Activated T-helper 1 cell treated with anti-CD3 and anti-CD28 coated beads, Interleukin-12 subunit alpha, Interleukin-12 subunit beta, Interleukin-2, Interleukin-4 antibody, amounts not matched to agents 30 ng/mL and 10 ng/mL and 1 ng/mL, durations not matched to agents 14 hours and 24 hours and 36 hours (primary cell): ENCODE measurements at regions of chr16 and their contacts with region 1.

Region 1: GRCh38 chr16:69520800-69521602 is 44.8 kb upstream of the NFAT5 start:
- DNase-seq: no peak
- H3K4me3 Mint-ChIP-seq: no peak overlapping the region
- H3K27ac Mint-ChIP-seq: peak overlapping the region; percentile 75
- H3K4me1 Mint-ChIP-seq: peaks cover 17% of the 10 kb centered on the region
- H3K27me3 Mint-ChIP-seq: no peaks in the 10 kb centered on the region

Region 2: DNA sequence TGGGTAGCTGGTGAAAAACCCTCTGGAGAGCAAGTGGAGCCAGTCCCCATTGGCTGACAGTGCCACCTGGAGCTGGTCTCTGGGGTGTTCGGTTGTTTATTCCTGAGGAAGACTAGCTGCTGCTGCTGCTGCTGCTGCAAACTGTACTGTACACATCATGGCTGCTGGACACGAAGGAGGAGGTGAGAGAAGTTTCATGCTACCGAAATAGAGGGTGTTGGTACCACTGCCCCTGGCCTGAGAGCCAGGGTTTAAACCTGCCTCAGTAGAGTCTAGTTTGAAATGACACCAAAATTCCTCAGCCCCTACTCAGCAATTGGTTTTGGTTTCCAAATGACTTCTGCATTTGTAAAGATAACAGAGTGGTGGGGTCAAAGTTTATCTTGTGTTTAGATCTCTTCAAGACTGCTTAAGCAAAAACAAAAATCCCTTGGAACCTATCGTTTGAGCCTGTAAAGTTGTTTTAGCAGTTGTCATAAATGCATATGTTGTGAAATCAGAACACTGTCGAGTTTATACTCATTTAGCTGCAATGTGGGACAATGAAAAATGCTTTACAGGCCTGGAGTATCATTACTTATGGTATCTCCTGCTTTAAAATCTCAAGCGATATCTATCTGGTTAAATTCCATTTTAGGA is 55.8 kb before region 1 on chr16:
- intact Hi-C with region 1: no loop called
- DNase-seq: peak; percentile 18
- H3K4me3 Mint-ChIP-seq: peak overlapping the region; percentile 45
- H3K27ac Mint-ChIP-seq: peak overlapping the region; percentile 75
- H3K4me1 Mint-ChIP-seq: peaks cover 55% of the 10 kb centered on the region
- H3K27me3 Mint-ChIP-seq: no peaks in the 10 kb centered on the region

Region 3: GRCh38 chr16:69535123-69536050 is 14.4 kb after region 1 on chr16:
- intact Hi-C with region 1: loop called (anchors 1 kb)
- DNase-seq: no peak
- H3K4me3 Mint-ChIP-seq: no peak overlapping the region
- H3K27ac Mint-ChIP-seq: no peak overlapping the region
- H3K4me1 Mint-ChIP-seq: peaks cover 19% of the 10 kb centered on the region
- H3K27me3 Mint-ChIP-seq: no peaks in the 10 kb centered on the region